Pancreas (tissue), 10 donors: ENCODE measurements at regions of chr12 and their contacts with region 1.

Region 1: DNA sequence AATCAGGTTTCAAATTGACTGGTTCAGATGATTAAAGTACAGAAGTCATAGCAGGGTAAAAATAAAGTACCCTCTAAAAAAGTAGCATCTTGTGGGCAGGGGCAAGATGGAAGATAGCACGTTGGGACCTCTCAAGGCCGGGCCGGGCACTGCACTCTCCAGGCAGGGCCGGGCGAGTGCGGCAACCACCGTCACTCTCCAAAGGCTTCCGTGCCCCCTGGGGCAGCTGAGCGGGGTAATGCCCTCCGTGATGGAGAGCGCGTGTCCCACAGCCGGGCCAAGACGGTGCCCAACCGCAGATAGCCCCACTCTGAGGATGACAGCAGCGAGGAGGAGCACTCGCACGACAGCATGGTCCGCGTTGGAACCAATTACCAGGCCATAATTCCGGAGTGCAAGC is 8.6 kb upstream of the PLXNC1 start:
- DNase-seq: no peak
- ATAC-seq: no peak
- H3K4me3 ChIP-seq: no peak overlapping the region
- H3K27ac ChIP-seq: no peak overlapping the region
- H3K4me1 ChIP-seq: no peaks in the 10 kb centered on the region
- H3K27me3 ChIP-seq: no peaks in the 10 kb centered on the region
- CTCF ChIP-seq: no peak

Region 2: DNA sequence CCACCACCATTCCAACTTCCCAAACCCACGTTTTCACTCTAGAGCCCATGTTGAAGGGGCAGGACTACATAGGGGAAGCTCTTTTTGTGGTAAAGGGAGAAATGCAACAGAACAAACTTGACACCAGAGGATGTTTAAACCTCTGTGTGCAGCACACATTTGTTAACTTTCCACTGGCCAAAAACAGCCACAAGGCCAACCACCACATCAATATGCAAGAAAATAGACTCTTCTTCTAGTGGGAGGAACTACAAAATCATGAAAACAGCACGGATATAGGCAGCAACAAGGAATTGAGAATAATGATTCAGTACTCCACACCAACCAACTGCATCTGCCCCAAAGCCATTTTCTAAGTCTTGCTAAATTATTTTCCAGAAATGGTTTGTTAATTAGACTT is 386.1 kb after region 1 on chr12:
- intact Hi-C with region 1: loop called in 1 of 3 experiments (anchors 5 kb)
- DNase-seq: no peak
- ATAC-seq: no peak
- H3K4me3 ChIP-seq: no peak overlapping the region
- H3K27ac ChIP-seq: no peak overlapping the region
- H3K4me1 ChIP-seq: no peaks in the 10 kb centered on the region
- H3K27me3 ChIP-seq: no peaks in the 10 kb centered on the region
- CTCF ChIP-seq: no peak

Region 3: DNA sequence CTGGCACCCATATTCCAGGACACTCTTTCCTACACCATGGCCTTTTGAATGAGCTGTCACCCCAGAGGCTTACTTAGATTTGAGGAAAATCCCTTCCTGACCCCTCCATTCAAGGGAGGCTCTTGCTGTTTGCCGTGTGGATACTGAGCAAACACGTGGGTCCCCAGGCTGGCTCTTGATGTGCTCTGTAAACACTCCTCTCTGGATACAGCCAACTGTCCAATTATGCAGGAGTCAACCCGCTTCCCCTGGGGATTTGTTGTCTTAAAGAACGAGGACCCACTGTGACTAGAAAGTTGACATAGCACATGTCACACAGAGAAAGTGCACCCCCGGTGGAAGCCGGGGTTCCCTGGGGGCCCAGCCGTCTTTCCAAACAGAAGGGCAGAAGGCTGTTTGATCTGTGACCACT is 395.7 kb after region 1 on chr12:
- intact Hi-C with region 1: loop called in 1 of 3 experiments (anchors 5 kb)
- DNase-seq: no peak
- ATAC-seq: peak in 3 of 4 donors; percentile 24 to 78 (median 62)
- H3K4me3 ChIP-seq: no peak overlapping the region
- H3K27ac ChIP-seq: no peak overlapping the region
- H3K4me1 ChIP-seq: no peaks in the 10 kb centered on the region
- H3K27me3 ChIP-seq: no peaks in the 10 kb centered on the region
- CTCF ChIP-seq: no peak